Common myeloid progenitor, CD34-positive (primary cell): ENCODE measurements at regions of chr3 and their contacts with region 1.

Region 1: DNA sequence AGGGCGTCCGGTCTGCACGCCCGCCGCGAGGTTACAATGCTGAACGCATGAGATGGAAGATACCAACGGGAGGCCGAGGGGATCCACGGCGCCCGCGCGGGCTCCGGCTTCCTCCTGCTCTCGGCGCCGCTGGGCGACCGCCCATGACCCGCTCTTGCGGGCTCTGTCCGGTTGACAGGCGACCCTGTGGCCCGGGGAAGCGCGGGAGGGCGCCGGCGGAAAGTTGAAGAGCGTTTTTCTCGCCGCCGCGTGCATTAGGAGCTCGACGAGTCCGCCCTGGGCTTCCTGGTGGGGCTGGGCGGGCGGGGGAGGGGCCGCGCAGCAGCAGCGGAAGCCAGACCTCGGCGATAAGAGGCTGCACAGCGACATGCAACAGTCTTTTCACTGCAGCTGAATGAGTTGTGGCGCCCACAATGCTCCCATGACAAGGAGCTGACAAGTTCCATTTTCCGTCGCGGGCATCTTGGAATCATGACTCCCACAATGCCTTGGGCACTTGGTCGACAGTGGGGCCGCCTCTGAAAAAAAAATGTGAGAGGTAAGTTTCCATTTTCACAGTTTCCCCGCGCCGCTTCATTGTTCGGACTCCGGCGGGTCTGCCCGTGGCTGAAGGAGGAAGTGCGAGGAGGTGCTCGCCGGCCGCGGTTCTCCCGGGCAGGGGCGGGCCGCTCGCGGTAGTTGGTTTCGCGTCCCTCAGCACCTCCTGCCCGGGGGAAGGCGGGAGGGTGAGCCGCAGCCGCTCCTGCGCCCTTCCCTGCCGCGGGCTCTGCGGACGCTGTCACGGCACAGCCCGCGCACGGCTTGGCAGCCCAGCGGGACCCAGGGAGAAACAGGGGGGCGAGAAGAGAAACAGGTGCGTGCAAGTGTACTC is at the start of gene MBNL1:
- DNase-seq: peak; percentile 96 to 99 (median 98)
- H3K4me3 ChIP-seq: peak within 1 kb of the TSS; percentile 69 to 100 (median 94)
- H3K27ac ChIP-seq: peak within 1 kb of the TSS; percentile 90 to 96
- H3K4me1 ChIP-seq: peaks cover 29 to 65% (median 53%) of the 10 kb centered on the region in 4 experiments
- H3K27me3 ChIP-seq: no peaks in the 10 kb centered on the region

Region 2: DNA sequence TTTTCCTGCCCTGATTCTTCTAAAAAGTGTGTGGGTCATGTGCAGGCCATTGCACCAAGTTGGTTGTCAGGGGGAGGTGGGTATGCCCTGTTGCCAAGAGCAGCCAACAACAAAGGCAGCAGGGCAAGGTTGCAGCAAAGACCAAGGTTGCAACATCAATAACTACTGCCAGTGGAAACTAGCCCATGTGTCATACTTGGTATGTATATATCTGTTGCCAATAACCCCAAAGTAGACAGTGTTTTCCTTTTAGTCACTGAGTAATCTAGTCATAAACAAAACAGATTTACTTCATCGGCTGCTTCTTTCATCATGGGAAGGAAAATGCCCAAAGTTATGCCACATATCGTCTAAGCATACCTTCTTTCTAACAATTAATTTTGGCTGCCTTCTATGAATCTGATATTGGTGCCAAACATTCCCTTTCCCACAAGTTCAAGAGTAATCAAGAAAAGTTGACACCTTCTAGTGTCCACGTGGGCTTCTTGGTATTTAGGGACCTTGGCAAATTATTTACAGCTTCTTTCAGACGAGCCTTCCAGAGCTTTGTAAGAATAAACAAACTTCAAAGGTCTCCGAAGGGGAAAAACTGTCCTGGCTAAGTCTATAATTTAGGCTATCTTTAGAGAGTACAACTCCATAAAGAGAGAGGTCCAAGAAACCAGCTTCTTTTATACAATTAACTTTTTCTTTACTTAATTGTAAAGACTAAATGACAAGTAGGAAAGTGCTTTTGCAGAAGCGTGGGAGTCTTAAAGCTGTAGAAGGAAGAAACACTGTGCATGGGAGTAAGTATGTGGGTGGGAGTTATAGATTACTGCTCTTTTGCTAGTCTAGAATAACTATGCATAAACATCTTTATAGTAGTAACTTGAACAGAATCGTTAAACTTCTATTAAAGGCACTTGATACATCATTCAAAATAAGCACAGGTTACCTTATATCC is 10.1 kb before region 1 on chr3:
- CTCF ChIA-PET with region 1: interaction called, 10 read pairs
- POLR2A ChIA-PET with region 1: interaction called, 3 read pairs
- DNase-seq: peak; percentile 50 to 85 (median 83)
- H3K4me3 ChIP-seq: peak overlapping the region in 2 of 7 experiments; percentile 2 to 18
- H3K27ac ChIP-seq: peak overlapping the region; percentile 43 to 82
- H3K4me1 ChIP-seq: peaks cover 51 to 76% (median 62%) of the 10 kb centered on the region in 4 experiments
- H3K27me3 ChIP-seq: no peaks in the 10 kb centered on the region

Region 3: DNA sequence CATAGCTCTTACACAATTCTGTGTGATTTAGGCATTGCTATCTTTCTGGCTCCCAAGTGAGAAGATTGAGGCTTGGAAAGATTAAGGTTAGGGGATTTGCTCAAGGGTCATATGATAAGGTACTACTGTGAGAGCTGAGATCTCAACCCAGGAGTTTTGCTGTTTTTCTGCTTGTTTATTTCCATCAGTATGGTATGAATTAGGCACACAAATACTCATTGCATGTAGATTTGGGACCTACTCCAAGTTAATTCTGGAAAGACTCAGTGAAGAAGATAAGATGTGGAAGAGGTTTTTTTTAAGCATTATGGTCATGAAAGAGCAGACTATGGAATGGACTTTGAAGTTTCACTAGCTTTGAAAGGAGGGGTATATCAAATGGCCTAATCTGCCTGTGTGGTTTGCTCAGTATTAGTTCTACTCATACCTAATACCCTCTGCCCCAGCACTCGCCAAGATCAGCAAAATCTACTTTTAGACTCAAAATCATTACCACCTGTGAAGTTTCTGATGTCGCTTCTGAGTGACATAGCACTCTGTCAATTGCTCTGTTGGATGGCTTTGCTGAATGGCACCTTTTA is 12.4 kb after region 1 on chr3:
- CTCF ChIA-PET with region 1: interaction called, 10 read pairs
- POLR2A ChIA-PET with region 1: interaction called, 4 read pairs
- DNase-seq: no peak
- H3K4me3 ChIP-seq: peak overlapping the region in 1 of 7 experiments; percentile 32
- H3K27ac ChIP-seq: no peak overlapping the region
- H3K4me1 ChIP-seq: peaks cover 46 to 86% (median 67%) of the 10 kb centered on the region in 4 experiments
- H3K27me3 ChIP-seq: no peaks in the 10 kb centered on the region

Region 4: GRCh38 chr3:152352554-152352953 is 83.8 kb after region 1 on chr3:
- CTCF ChIA-PET with region 1: no interaction called
- POLR2A ChIA-PET with region 1: no interaction called
- DNase-seq: no peak
- H3K4me3 ChIP-seq: no peak overlapping the region
- H3K27ac ChIP-seq: no peak overlapping the region
- H3K4me1 ChIP-seq: peaks cover 0 to 18% (median 7%) of the 10 kb centered on the region in 4 experiments
- H3K27me3 ChIP-seq: no peaks in the 10 kb centered on the region

Region 5: GRCh38 chr3:152402695-152403451 is 134.1 kb after region 1 on chr3:
- CTCF ChIA-PET with region 1: no interaction called
- POLR2A ChIA-PET with region 1: no interaction called
- DNase-seq: peak; percentile 21 to 64 (median 59)
- H3K4me3 ChIP-seq: no peak overlapping the region
- H3K27ac ChIP-seq: peak overlapping the region in 1 of 2 experiments; percentile 45
- H3K4me1 ChIP-seq: peaks cover 12 to 59% (median 23%) of the 10 kb centered on the region in 4 experiments
- H3K27me3 ChIP-seq: no peaks in the 10 kb centered on the region